GM10248 (cell line): ENCODE measurements at regions of chr14 and their contacts with region 1.

Region 1: DNA sequence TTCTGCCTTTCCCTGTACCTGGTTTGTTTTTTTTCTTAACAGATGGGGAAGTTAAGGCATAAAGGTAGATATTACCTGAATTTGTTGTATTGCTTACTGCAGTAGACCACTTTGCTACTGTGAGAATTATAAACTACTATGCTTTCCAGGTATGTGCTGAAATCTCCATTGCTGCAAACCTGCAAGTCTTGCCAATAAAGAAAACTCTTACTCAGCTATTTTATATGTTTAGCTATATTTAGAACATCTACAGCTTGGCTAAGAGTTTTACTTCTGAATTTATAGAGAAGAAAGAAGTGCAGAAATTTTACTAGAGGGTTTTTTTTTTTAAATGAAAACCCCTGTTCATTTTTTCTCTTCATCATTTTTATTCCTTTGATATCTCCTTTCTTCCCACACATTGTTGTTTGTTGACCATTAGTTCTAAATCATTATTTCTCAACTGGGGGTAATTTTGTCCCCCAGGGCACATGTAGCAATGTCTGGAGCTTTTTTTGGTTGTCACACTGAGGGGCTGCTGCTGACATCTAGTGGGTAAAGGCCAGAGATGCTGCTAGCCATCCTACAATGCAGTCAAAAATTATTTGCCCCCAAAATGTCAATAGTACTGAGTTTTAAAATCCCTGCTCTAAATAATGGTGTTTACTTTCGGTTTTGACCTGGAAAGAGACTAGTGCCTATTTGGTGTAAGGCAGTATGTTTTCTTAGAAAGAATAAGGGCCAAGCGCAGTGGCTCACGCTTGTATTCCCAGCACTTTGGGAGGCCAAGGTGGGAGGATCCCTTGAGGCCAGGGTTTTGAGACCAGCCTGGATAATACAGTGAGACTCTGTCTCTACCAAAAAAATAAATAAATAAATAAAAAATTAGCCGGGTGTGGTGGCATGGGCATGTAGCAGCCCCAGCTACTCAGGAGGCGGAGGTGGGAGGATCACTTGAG is 48.6 kb downstream of the PCNX1 start:
- DNase-seq: peak; percentile 13
- CTCF ChIP-seq: peak; percentile 68

Region 2: GRCh38 chr14:70771781-70772212 is 184.0 kb before region 1 on chr14:
- CTCF ChIA-PET with region 1: no interaction called
- POLR2A ChIA-PET with region 1: no interaction called
- DNase-seq: no peak
- CTCF ChIP-seq: no peak

Region 3: GRCh38 chr14:70934502-70935134 is 21.2 kb before region 1 on chr14:
- CTCF ChIA-PET with region 1: interaction called, 30 read pairs
- POLR2A ChIA-PET with region 1: no interaction called
- DNase-seq: peak; percentile 30
- CTCF ChIP-seq: no peak

Region 4: GRCh38 chr14:70972107-70972976 is 16.5 kb after region 1 on chr14:
- CTCF ChIA-PET with region 1: interaction called, 21 read pairs
- POLR2A ChIA-PET with region 1: no interaction called
- DNase-seq: peak; percentile 64
- CTCF ChIP-seq: peak; percentile 85